K562 (cell line): ENCODE measurements at regions of chr4 and their contacts with region 1.

Region 1: GRCh38 chr4:99949034-99949998 is 759 bp downstream of the H2AZ1 start:
- DNase-seq: peak; percentile 75 to 95 (median 78)
- ATAC-seq: peak; percentile 54
- H3K4me3 ChIP-seq: peak overlapping the region; percentile 62
- H3K27ac ChIP-seq: peak overlapping the region; percentile 99
- H3K4me1 ChIP-seq: peaks cover 14 to 19% of the 10 kb centered on the region in 2 experiments
- H3K27me3 ChIP-seq: no peaks in the 10 kb centered on the region
- CTCF ChIP-seq: peak; percentile 78 to 91 (median 85)
- EP300 ChIP-seq: peak; percentile 38; the same call in 1 of the 2 replicates
- POLR2A ChIP-seq: peak; percentile 79
- RAD21 ChIP-seq: peak; percentile 47 to 56

Region 2: DNA sequence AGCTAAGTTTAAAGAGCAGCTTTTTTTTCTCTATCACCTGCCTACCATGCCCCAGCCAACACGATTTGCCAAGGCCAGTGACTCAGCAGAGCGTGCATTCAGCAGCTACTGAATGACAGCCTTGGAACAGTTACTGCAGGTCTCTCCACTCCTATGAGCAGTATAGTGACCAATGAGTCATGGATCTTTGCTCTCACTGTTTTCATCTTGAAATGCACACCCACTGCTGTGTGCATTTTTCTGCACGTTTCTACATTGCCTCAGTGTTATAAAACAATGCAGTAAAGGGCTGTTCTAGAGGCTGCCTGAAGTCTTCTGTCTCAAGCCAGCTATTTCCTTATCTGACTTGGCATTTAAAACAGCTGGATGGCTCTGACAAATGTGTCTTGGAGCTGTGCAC is 225.7 kb before region 1 on chr4:
- CTCF ChIA-PET with region 1: no interaction called
- POLR2A ChIA-PET with region 1: interaction called, 3 read pairs
- in situ Hi-C with region 1: no loop called
- intact Hi-C with region 1: loop called (anchors 2 kb)
- DNase-seq: peak; percentile 17 to 88 (median 50)
- ATAC-seq: peak; percentile 98
- H3K4me3 ChIP-seq: no peak overlapping the region; the same call in 1 of the 2 replicates
- H3K27ac ChIP-seq: peak overlapping the region; percentile 55; the same call in 2 of the 3 replicates
- H3K4me1 ChIP-seq: peaks cover 4 to 18% of the 10 kb centered on the region in 2 experiments; a peak in 4 of 5 replicates
- H3K27me3 ChIP-seq: no peaks in the 10 kb centered on the region
- CTCF ChIP-seq: no peak
- EP300 ChIP-seq: no peak; the same call in 1 of the 2 replicates
- POLR2A ChIP-seq: no peak
- RAD21 ChIP-seq: no peak

Region 3: GRCh38 chr4:99841129-99841528 is 108.2 kb before region 1 on chr4:
- CTCF ChIA-PET with region 1: no interaction called
- POLR2A ChIA-PET with region 1: interaction called, 12 read pairs
- in situ Hi-C with region 1: no loop called
- intact Hi-C with region 1: loop called (anchors 2 kb)
- DNase-seq: no peak
- ATAC-seq: no peak
- H3K4me3 ChIP-seq: no peak overlapping the region
- H3K27ac ChIP-seq: no peak overlapping the region
- H3K4me1 ChIP-seq: peaks cover 0 to 26% of the 10 kb centered on the region in 2 experiments; a peak in 3 of 5 replicates
- H3K27me3 ChIP-seq: no peaks in the 10 kb centered on the region
- CTCF ChIP-seq: no peak
- EP300 ChIP-seq: no peak
- POLR2A ChIP-seq: no peak
- RAD21 ChIP-seq: no peak

Region 4: DNA sequence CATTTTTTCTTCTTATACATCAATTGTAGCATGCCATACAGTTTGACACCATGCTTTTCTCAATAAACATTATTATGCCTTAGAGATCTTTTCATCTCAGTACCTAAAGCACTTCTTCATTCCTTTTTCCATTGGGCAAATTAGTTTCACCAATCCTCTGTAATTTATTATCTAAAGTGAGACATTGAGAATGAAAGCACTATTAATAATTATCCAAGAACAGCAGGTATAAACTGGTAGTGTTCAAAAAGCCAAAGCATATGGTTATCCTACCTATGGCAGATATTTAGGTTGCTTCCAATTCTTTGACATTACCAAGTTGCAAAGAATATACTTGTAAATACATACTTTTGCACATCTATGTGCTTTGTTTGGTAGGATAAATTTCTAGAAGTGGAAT is 70.7 kb before region 1 on chr4:
- CTCF ChIA-PET with region 1: no interaction called
- POLR2A ChIA-PET with region 1: no interaction called
- in situ Hi-C with region 1: no loop called
- intact Hi-C with region 1: no loop called
- DNase-seq: no peak
- ATAC-seq: no peak
- H3K4me3 ChIP-seq: no peak overlapping the region
- H3K27ac ChIP-seq: no peak overlapping the region
- H3K4me1 ChIP-seq: no peaks in the 10 kb centered on the region
- H3K27me3 ChIP-seq: no peaks in the 10 kb centered on the region
- CTCF ChIP-seq: no peak
- EP300 ChIP-seq: no peak
- POLR2A ChIP-seq: no peak
- RAD21 ChIP-seq: no peak

Region 5: GRCh38 chr4:99894161-99894997 is 54.9 kb before region 1 on chr4 and contains the start of gene LAMTOR3:
- CTCF ChIA-PET with region 1: no interaction called
- POLR2A ChIA-PET with region 1: interaction called, 11 read pairs
- in situ Hi-C with region 1: no loop called
- intact Hi-C with region 1: loop called (anchors 2 kb)
- DNase-seq: peak; percentile 93 to 94 (median 93)
- ATAC-seq: peak; percentile 99
- H3K4me3 ChIP-seq: peak within 1 kb of the TSS; percentile 91
- H3K27ac ChIP-seq: peak within 1 kb of the TSS; percentile 81
- H3K4me1 ChIP-seq: peaks cover 0 to 3% of the 10 kb centered on the region in 2 experiments; a peak in 4 of 5 replicates
- H3K27me3 ChIP-seq: no peaks in the 10 kb centered on the region
- CTCF ChIP-seq: no peak
- EP300 ChIP-seq: no peak
- POLR2A ChIP-seq: peak; percentile 71; the same call in 1 of the 2 replicates
- RAD21 ChIP-seq: no peak
- polyA plus RNA-seq, gene LAMTOR3: 136 to 146 TPM

Region 6: DNA sequence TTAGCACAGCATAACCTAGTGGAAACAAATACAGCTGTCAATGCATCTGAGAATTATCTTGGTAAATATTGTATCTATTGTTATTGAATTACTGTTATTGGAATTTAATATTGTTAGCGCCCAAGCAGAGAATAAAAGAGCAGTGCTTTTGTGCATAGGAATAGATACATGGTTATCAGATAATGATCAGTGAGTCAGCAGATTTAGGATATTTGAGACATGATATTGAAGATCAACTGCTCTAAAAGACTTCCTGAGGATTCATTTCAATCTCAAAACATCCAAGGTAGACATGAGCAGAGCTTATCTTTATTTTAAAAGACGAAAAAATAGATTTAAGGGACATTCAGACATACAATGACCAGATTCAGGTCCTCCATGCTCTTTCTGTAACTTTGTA is 11.3 kb after region 1 on chr4:
- CTCF ChIA-PET with region 1: no interaction called
- POLR2A ChIA-PET with region 1: interaction called, 12 read pairs
- in situ Hi-C with region 1: no loop called
- intact Hi-C with region 1: no loop called
- DNase-seq: no peak
- ATAC-seq: no peak
- H3K4me3 ChIP-seq: no peak overlapping the region
- H3K27ac ChIP-seq: no peak overlapping the region
- H3K4me1 ChIP-seq: no peaks in the 10 kb centered on the region
- H3K27me3 ChIP-seq: no peaks in the 10 kb centered on the region; a peak in 1 of 5 replicates
- CTCF ChIP-seq: no peak
- EP300 ChIP-seq: no peak
- POLR2A ChIP-seq: no peak
- RAD21 ChIP-seq: no peak

Region 7: DNA sequence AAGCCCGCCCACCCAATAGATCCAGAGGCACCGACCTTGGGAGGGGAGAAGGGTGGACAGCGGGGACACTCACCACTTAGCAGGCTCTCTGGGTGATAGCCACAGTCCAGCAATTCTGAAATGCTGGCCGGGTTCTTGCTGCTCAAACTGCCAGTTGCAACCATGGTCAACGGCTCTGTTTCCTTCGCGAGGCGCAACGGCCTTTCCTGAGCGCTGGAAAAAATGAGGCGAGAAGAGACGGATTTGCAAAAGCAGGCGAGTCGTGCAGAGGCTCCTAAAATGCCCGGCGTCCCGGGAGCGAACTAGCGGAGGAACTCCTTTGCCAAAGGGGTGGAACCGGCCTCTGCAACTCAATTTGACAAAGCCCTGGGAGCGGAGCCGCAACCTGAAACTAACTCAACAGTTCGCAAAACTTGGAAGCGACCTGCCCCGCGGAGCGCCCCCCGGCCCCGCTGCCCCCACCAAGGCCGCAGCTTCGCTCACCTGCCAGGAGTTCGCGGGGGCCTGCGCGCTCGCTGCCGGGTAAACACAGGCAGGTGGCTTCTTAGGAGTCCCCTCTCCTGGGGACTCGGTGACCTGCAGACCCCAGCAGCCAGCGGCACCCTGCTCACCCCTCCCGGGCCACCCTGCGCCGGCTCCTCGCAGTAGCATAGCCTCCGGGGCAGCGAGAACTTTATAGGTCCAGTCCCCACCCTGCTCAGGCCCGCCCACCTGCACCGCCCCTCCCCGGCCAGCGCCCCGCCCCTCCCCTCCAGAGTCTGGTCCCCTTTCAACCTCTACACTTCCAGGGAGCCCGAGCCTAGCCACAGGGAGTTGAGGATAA is 240.7 kb after region 1 on chr4 and contains the start of gene DDIT4L:
- CTCF ChIA-PET with region 1: no interaction called
- POLR2A ChIA-PET with region 1: no interaction called
- in situ Hi-C with region 1: no loop called
- intact Hi-C with region 1: no loop called
- DNase-seq: peak; percentile 1 to 26 (median 21)
- ATAC-seq: peak; percentile 69
- H3K4me3 ChIP-seq: no peak within 1 kb of the TSS
- H3K27ac ChIP-seq: no peak within 1 kb of the TSS
- H3K4me1 ChIP-seq: peaks cover 0 to 3% of the 10 kb centered on the region in 2 experiments; a peak in 1 of 5 replicates
- H3K27me3 ChIP-seq: peaks cover 0 to 4% of the 10 kb centered on the region in 2 experiments; a peak in 1 of 5 replicates
- CTCF ChIP-seq: no peak
- EP300 ChIP-seq: no peak
- POLR2A ChIP-seq: no peak
- RAD21 ChIP-seq: no peak
- polyA plus RNA-seq, gene DDIT4L: not detected

Region 8: DNA sequence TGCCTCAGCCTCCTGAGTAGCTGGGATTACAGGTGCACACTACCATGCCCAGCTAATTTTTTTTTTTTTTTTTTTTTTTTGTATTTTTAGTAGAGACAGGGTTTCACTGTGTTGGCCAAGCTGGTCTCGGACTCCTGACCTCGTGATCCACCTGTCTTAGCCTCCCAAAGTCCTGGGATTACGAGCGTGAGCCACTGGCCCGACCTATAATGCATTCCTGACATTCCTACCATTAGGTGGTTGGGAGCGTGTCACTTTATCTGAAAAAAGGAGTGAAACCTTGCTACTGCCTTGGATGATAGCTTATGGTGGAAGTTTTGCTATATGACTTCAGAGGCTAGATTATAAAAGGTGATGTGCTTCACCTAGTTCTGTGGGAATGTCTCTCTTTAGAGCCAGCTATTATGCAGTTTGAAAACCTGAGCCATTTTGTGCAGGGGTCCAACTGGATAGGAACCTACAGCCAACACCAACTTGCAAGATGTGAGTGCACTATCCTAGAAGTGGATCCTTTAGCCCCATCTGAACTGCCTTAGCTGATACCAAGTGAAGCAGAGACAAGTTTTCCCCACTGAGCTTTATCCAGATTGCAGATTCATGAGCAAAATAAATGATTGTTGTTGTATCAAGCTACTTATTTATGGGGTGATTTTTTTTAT is 598.4 kb after region 1 on chr4:
- CTCF ChIA-PET with region 1: no interaction called
- POLR2A ChIA-PET with region 1: no interaction called
- in situ Hi-C with region 1: no loop called
- intact Hi-C with region 1: no loop called
- DNase-seq: no peak
- ATAC-seq: no peak
- H3K4me3 ChIP-seq: no peak overlapping the region
- H3K27ac ChIP-seq: no peak overlapping the region
- H3K4me1 ChIP-seq: no peaks in the 10 kb centered on the region
- H3K27me3 ChIP-seq: no peaks in the 10 kb centered on the region
- CTCF ChIP-seq: no peak
- EP300 ChIP-seq: no peak
- POLR2A ChIP-seq: no peak
- RAD21 ChIP-seq: no peak